MCF 10A (cell line): ENCODE measurements at regions of chr12 and their contacts with region 1.

Region 1: GRCh38 chr12:10140001-10140400 is 10.0 kb upstream of the CLEC7A start:
- DNase-seq: peak; percentile 72
- H3K4me3 Mint-ChIP-seq: no peak overlapping the region
- H3K27ac Mint-ChIP-seq: no peak overlapping the region
- H3K4me1 Mint-ChIP-seq: no peaks in the 10 kb centered on the region
- H3K27me3 Mint-ChIP-seq: no peaks in the 10 kb centered on the region
- CTCF ChIP-seq: peak; percentile 69

Region 2: GRCh38 chr12:9741726-9742125 is 398.3 kb before region 1 on chr12:
- CTCF ChIA-PET with region 1: interaction called, 76 read pairs
- POLR2A ChIA-PET with region 1: interaction called, 3 read pairs
- intact Hi-C with region 1: no loop called
- DNase-seq: no peak
- H3K4me3 Mint-ChIP-seq: no peak overlapping the region
- H3K27ac Mint-ChIP-seq: no peak overlapping the region
- H3K4me1 Mint-ChIP-seq: peaks cover 8% of the 10 kb centered on the region
- H3K27me3 Mint-ChIP-seq: no peaks in the 10 kb centered on the region
- CTCF ChIP-seq: no peak

Region 3: GRCh38 chr12:9925708-9926393 is 214.2 kb before region 1 on chr12:
- CTCF ChIA-PET with region 1: interaction called, 3 read pairs
- POLR2A ChIA-PET with region 1: no interaction called
- intact Hi-C with region 1: loop called (anchors 5 kb)
- DNase-seq: peak; percentile 57
- H3K4me3 Mint-ChIP-seq: peak overlapping the region; percentile 33
- H3K27ac Mint-ChIP-seq: no peak overlapping the region
- H3K4me1 Mint-ChIP-seq: peaks cover 6% of the 10 kb centered on the region
- H3K27me3 Mint-ChIP-seq: no peaks in the 10 kb centered on the region
- CTCF ChIP-seq: peak; percentile 46

Region 4: DNA sequence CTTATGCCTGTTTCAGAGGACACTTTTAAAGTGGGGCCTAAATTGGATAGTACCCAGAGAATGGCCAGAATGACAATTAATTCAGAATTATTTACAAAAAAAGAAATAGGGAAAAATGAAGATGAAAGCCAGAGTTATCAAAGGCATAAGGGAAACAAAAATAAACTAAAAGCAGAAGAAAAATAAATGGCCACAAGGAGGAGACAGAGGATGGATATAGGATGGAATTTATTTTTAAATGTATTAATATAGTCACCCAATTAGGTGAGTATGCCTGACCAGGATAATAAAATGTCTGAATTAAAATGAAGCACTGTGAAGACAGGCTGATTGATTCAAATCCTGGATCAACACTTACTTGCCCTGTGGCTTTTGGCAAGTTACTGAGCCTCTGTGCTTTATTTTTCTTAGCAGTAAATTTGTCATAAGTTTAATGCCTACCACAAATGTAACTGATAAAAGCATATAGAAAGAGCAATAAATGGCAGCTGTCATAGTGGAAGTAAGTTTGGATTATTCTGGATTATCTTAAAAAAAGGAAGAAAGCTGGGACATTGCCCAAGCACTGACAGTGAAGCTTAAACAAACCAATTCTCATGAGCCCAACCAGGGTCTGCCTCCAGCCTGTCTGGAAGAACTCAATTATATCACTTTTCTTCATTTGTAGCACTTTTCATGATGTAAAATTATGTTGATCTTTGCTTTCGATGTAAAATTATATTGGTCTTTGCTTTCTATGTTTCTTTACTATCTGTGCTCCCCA is 106.0 kb before region 1 on chr12:
- CTCF ChIA-PET with region 1: interaction called, 134 read pairs
- POLR2A ChIA-PET with region 1: no interaction called
- intact Hi-C with region 1: loop called (anchors 1 kb)
- DNase-seq: peak; percentile 48
- H3K4me3 Mint-ChIP-seq: no peak overlapping the region
- H3K27ac Mint-ChIP-seq: no peak overlapping the region
- H3K4me1 Mint-ChIP-seq: peaks cover 23% of the 10 kb centered on the region
- H3K27me3 Mint-ChIP-seq: no peaks in the 10 kb centered on the region
- CTCF ChIP-seq: peak; percentile 70

Region 5: DNA sequence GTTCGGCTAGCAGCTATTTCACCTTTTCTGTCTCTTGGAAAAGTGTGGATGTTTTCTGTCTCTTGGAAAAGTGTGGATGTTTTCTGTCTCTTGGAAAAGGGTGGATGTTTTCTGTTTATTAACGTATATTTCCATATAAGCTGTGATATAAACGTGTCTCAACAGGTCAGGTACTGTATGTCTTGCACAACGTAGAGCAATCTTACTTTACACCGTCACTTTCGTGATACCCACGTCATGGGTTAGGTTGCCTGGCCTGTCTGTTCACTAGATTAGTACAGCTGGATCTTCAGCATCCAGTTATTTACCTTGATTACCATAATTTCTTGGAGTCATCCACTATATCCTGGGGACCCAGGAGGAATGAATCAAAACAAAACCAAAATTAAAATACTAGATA is 24.1 kb before region 1 on chr12:
- CTCF ChIA-PET with region 1: interaction called, 10 read pairs
- POLR2A ChIA-PET with region 1: interaction called, 3 read pairs
- intact Hi-C with region 1: no loop called
- DNase-seq: no peak
- H3K4me3 Mint-ChIP-seq: no peak overlapping the region
- H3K27ac Mint-ChIP-seq: no peak overlapping the region
- H3K4me1 Mint-ChIP-seq: no peaks in the 10 kb centered on the region
- H3K27me3 Mint-ChIP-seq: no peaks in the 10 kb centered on the region
- CTCF ChIP-seq: no peak

Region 6: DNA sequence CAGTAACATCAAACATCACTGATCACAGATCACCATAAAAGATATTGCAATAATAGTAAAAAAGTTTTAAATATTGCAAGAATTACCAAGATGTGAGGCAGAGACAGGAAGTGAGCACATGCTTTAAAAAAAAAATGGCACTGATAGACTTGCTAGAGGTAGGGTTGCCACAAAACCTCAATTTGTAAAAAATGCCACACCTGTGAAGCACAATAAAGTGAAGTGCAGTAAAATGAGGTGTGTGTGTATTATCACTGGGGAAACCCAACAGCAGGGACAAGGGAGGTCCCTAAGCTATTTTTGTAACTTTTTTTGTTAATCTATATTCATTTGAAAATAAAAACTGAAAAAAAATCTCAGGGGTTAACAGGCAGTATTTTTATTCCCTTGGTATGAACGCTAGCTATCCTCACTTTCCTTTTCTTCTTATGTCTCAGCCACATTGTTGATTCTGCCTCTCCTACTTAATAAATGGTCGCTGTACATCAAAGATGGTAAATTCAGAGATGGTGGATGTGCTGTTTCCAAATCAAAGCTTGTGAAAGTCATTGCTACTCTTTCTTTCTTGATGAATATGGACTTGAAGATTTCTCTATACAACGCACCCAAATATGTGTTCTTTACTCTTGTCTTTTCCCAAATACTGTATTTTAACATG is 153.7 kb after region 1 on chr12:
- CTCF ChIA-PET with region 1: no interaction called
- POLR2A ChIA-PET with region 1: no interaction called
- intact Hi-C with region 1: no loop called
- DNase-seq: no peak
- H3K4me3 Mint-ChIP-seq: no peak overlapping the region
- H3K27ac Mint-ChIP-seq: no peak overlapping the region
- H3K4me1 Mint-ChIP-seq: no peaks in the 10 kb centered on the region
- H3K27me3 Mint-ChIP-seq: no peaks in the 10 kb centered on the region
- CTCF ChIP-seq: no peak